ENCODE measurements at regions of chr2 and their contacts with region 1.

Region 1: DNA sequence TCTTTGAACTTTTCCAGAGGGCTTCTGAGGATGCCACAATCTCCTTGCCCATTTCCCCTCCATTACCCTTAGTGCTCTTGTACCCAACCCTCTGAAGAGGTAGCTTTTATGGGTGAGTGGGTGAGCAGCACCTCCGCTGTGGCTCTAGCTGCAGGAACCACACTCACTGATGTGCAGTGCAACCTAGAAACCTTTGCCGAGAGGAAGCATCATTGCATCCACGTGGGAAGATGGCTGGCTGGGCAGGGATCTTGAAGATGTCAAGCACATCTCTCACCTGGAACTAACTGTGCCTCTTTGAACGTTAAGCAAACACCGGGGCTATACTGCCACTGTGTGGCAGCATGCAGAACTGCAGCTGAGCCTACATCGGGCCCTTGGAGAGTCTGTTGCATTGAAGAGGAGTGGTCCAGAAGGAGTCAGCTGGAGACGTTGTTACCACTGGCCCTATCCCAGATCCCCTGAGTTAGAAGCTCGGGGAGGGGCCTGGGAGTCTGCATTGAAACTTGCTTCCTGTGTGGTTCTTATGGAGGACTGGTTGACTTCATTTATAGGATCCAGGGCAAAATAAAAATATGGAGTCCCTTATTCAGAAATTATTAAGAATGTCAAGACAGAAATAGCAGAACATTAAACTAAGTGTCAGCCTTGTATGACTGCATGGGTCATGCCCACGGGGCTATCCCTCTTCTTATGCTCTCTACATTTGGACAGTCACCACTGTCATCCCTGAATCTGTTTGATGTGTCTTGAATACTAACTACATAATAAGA is 28.7 kb downstream of the IGFBP5 start:
- DNase-seq: peak; percentile 75
- H3K27ac ChIP-seq: peak overlapping the region; percentile 98
- CTCF ChIP-seq: peak; percentile 95

Region 2: GRCh38 chr2:216224388-216224787 is 442.3 kb before region 1 on chr2:
- CTCF ChIA-PET with region 1: no interaction called
- POLR2A ChIA-PET with region 1: no interaction called
- DNase-seq: no peak
- H3K27ac ChIP-seq: no peak overlapping the region
- CTCF ChIP-seq: no peak

Region 3: GRCh38 chr2:216519154-216519762 is 147.4 kb before region 1 on chr2:
- CTCF ChIA-PET with region 1: interaction called, 63 read pairs
- POLR2A ChIA-PET with region 1: no interaction called
- DNase-seq: peak; percentile 67
- H3K27ac ChIP-seq: no peak overlapping the region
- CTCF ChIP-seq: peak; percentile 78

Region 4: DNA sequence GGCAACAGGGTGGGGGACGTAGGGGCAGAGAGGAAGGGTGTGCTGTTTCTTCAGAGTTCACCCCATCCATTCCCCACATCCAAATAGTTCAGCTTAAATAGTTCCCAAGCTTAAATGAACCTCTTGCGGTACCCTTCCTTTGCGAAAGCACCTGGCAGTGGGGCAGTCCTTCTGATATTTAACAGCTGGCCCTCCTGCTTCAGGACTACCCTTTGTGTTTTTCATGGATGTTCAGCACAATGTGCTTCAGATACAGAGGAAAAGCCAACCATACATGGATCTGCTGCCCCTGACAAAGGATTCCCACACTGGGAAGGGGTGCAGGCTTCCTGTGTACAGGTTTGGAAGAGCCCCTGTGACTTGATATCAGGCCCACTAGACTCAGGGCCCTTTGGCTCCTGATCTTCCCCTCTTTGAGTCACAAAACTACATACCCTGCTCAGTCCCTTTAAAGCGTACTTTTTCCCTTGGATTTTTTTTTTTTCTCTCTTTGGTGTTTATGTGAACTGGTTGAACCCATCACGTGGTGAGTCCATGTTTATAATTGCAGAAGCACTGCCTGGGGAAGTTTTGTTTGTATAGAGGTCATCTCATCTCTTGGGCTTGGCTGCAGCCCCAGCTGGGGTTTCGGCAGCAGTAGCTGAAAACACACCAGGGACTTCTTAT is 74.0 kb after region 1 on chr2:
- CTCF ChIA-PET with region 1: no interaction called
- POLR2A ChIA-PET with region 1: no interaction called
- DNase-seq: no peak
- H3K27ac ChIP-seq: no peak overlapping the region
- CTCF ChIP-seq: no peak

Measured in RWPE1 (cell line).